H1 (cell line): ENCODE measurements at regions of chr6 and their contacts with region 1.

Region 1: GRCh38 chr6:132483779-132484679 is 28.9 kb downstream of the STX7 start:
- DNase-seq: no peak
- H3K4me3 ChIP-seq: no peak overlapping the region
- H3K27ac ChIP-seq: no peak overlapping the region
- H3K4me1 ChIP-seq: no peaks in the 10 kb centered on the region
- H3K27me3 ChIP-seq: no peaks in the 10 kb centered on the region
- CTCF ChIP-seq: peak in 2 of 3 experiments; percentile 46 to 64; a peak in 2 of 4 replicates
- EP300 ChIP-seq: no peak
- POLR2A ChIP-seq: no peak
- RAD21 ChIP-seq: peak; percentile 86 to 89

Region 2: GRCh38 chr6:132289756-132290155 is 194.3 kb before region 1 on chr6:
- CTCF ChIA-PET with region 1: interaction called, 17 read pairs
- POLR2A ChIA-PET with region 1: no interaction called
- DNase-seq: no peak
- H3K4me3 ChIP-seq: no peak overlapping the region
- H3K27ac ChIP-seq: no peak overlapping the region
- H3K4me1 ChIP-seq: no peaks in the 10 kb centered on the region
- H3K27me3 ChIP-seq: no peaks in the 10 kb centered on the region
- CTCF ChIP-seq: no peak
- EP300 ChIP-seq: no peak
- POLR2A ChIP-seq: no peak
- RAD21 ChIP-seq: no peak

Region 3: DNA sequence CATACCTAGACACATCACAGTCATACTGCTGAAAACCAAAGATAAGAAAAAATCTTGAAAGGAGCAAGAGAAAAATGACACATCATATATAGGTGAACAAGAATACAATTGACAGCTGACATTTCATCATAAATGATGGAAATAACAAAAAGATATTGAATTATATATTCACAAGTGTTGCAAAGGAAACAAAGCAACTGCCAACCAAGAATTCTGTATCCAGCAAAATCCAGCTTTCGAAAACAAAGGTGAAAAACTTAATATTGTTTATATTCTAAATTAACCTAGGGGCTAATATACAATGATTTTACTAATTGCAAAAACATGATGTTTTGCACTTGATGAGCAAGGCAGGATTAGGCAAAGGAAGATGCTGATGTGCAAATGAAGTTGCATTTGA is 167.1 kb before region 1 on chr6:
- CTCF ChIA-PET with region 1: interaction called, 12 read pairs
- POLR2A ChIA-PET with region 1: no interaction called
- DNase-seq: no peak
- H3K4me3 ChIP-seq: no peak overlapping the region
- H3K27ac ChIP-seq: no peak overlapping the region
- H3K4me1 ChIP-seq: no peaks in the 10 kb centered on the region
- H3K27me3 ChIP-seq: no peaks in the 10 kb centered on the region
- CTCF ChIP-seq: no peak
- EP300 ChIP-seq: no peak
- POLR2A ChIP-seq: no peak
- RAD21 ChIP-seq: no peak

Region 4: GRCh38 chr6:132465530-132466485 is 18.2 kb before region 1 on chr6:
- CTCF ChIA-PET with region 1: interaction called, 16 read pairs
- POLR2A ChIA-PET with region 1: no interaction called
- DNase-seq: no peak
- H3K4me3 ChIP-seq: no peak overlapping the region
- H3K27ac ChIP-seq: no peak overlapping the region
- H3K4me1 ChIP-seq: no peaks in the 10 kb centered on the region
- H3K27me3 ChIP-seq: no peaks in the 10 kb centered on the region
- CTCF ChIP-seq: no peak
- EP300 ChIP-seq: no peak
- POLR2A ChIP-seq: no peak
- RAD21 ChIP-seq: no peak

Region 5: GRCh38 chr6:132471788-132472187 is 12.2 kb before region 1 on chr6:
- CTCF ChIA-PET with region 1: interaction called, 15 read pairs
- POLR2A ChIA-PET with region 1: interaction called, 3 read pairs
- DNase-seq: no peak
- H3K4me3 ChIP-seq: no peak overlapping the region
- H3K27ac ChIP-seq: no peak overlapping the region
- H3K4me1 ChIP-seq: no peaks in the 10 kb centered on the region
- H3K27me3 ChIP-seq: no peaks in the 10 kb centered on the region
- CTCF ChIP-seq: no peak
- EP300 ChIP-seq: no peak
- POLR2A ChIP-seq: no peak
- RAD21 ChIP-seq: no peak

Region 6: GRCh38 chr6:133026705-133027104 is 542.7 kb after region 1 on chr6:
- CTCF ChIA-PET with region 1: no interaction called
- POLR2A ChIA-PET with region 1: no interaction called
- DNase-seq: no peak
- H3K4me3 ChIP-seq: no peak overlapping the region
- H3K27ac ChIP-seq: no peak overlapping the region
- H3K4me1 ChIP-seq: no peaks in the 10 kb centered on the region
- H3K27me3 ChIP-seq: no peaks in the 10 kb centered on the region
- CTCF ChIP-seq: no peak
- EP300 ChIP-seq: no peak
- POLR2A ChIP-seq: no peak
- RAD21 ChIP-seq: no peak

Region 7: DNA sequence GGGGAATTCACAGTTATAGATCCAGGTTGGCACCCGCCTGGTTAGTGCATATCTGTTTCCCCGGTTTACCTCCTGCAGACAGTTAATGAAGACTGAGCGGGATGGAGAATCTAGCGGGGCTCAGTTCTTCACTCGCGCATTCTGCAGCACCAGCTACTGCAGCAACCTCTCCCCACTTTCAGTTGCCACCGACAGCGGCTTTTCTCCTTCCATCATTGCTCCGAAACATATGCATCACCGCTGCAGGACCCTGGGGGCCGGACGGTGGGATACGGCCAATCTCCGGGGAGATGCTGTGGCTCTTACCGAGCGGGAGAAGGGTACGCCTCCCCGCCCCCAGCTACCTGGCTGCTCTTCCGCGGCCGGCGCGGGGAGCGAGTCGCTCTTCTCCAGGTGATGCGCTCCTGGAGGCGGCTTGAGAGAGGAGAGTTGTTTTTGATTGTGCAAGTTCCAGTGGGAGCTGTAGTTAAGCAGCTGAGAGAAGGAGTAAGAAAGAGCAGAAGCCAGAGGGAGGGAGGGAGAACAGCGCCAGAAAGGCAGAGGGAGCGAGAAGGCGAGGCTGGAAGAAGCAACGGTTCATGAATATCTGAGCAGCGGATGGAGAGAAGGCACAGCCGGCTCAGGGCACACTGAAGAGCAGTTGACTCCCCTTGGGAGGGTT is 1833.6 kb after region 1 on chr6 and contains the start of gene SGK1:
- CTCF ChIA-PET with region 1: no interaction called
- POLR2A ChIA-PET with region 1: no interaction called
- DNase-seq: peak in 1 of 2 experiments; percentile 66
- H3K4me3 ChIP-seq: peak within 1 kb of the TSS; percentile 35 to 64 (median 62)
- H3K27ac ChIP-seq: no peak within 1 kb of the TSS
- H3K4me1 ChIP-seq: peaks cover 5 to 15% (median 7%) of the 10 kb centered on the region in 4 experiments; a peak in 5 of 7 replicates
- H3K27me3 ChIP-seq: 0 out of 7 replicates have a peak, but pooled peaks cover 0 to 2% (median 0%) of the 10 kb centered on the region in 4 experiments
- CTCF ChIP-seq: peak in 2 of 3 experiments; percentile 12 to 24; a peak in 3 of 4 replicates
- EP300 ChIP-seq: peak; percentile 44 to 59; a peak in 1 of 3 replicates
- POLR2A ChIP-seq: no peak
- RAD21 ChIP-seq: peak; percentile 22 to 27; a peak in 3 of 4 replicates
- total RNA-seq, gene SGK1: 18.4 and 18.6 TPM in 2 replicates